ENCODE measurements at regions of chr11 and their contacts with region 1.

Region 1: GRCh38 chr11:14789879-14790484 is 102.0 kb downstream of the CYP2R1 start:
- DNase-seq: no peak
- H3K4me3 Mint-ChIP-seq: no peak overlapping the region
- H3K27ac Mint-ChIP-seq: no peak overlapping the region
- H3K4me1 Mint-ChIP-seq: peaks cover 18% of the 10 kb centered on the region
- H3K27me3 Mint-ChIP-seq: no peaks in the 10 kb centered on the region

Region 2: DNA sequence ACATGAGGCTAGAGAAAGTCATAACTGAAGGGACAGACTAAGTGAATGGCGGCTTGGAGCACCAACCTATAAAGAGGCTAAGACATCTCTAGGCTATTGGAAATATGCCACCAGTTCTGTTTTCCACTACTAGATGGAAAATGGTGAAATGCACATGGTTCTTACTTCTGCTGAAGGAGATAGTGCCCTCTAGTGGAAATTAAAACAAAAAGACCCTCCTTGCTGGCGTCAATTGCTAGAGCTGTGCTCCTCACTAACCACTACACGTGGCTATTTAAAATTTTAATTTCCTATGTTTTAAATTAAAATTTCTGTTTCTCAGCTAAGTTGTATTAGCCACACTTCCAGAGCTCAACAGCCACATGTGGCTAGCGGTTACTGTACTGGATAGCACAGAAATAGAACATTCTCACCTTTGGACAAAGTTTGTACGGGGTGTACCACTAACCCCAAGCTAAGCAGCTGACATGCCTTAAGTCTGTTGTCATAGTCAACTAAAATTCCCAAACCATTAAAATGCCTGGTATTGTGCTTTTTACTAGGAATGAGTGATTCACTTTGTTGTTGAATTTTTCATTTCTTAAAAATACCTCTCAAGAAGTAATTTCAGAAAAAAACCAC is 216.3 kb after region 1 on chr11:
- intact Hi-C with region 1: loop called (anchors 5 kb)
- DNase-seq: peak; percentile 67
- H3K4me3 Mint-ChIP-seq: no peak overlapping the region
- H3K27ac Mint-ChIP-seq: no peak overlapping the region
- H3K4me1 Mint-ChIP-seq: no peaks in the 10 kb centered on the region
- H3K27me3 Mint-ChIP-seq: peaks cover 48% of the 10 kb centered on the region

Region 3: DNA sequence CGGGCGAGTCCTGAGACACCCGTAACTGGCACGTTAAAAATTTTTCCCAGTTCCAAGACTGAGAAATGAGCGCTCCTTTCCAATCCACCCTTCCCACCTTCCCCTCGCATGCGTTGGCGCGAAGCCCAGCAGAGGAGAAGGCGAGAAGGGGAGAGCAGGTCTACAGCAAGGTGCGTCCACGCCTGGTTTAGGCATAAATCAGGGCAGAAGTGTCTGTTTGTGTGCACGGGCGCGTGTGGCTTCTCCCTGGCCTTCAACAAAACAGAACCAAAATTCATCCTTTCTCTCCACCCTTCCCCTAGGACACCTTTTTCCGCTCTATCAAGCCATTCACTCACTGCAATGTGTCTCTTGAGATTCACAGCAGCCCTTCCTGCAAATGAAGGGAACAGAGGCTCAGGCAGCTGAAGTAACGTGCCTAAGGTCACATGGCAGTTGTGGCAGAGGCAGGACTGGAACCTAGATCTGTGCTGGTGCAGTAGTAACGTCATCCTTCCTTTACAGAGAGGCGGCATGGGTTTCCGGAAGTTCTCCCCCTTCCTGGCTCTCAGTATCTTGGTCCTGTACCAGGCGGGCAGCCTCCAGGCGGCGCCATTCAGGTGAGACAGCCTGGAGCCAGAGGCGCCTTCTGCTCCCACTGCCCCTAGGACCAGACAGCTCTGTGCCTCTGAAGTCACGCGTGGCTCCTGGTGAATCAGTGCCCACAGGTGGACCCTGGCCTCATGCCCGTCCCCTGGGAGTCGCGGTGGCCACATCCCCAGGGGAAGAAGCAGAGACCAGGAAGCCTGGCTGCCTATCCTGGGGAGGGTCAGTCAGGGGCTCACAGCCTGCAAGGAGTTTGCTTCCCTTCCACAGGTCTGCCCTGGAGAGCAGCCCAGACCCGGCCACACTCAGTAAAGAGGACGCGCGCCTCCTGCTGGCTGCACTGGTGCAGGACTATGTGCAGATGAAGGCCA is 284.5 kb after region 1 on chr11:
- intact Hi-C with region 1: loop called (anchors 1 kb)
- DNase-seq: peak; percentile 95
- H3K4me3 Mint-ChIP-seq: peak overlapping the region; percentile 84
- H3K27ac Mint-ChIP-seq: peak overlapping the region; percentile 59
- H3K4me1 Mint-ChIP-seq: peaks cover 16% of the 10 kb centered on the region
- H3K27me3 Mint-ChIP-seq: peaks cover 37% of the 10 kb centered on the region

Region 4: GRCh38 chr11:15208378-15209222 is 418.6 kb after region 1 on chr11:
- intact Hi-C with region 1: loop called (anchors 5 kb)
- DNase-seq: peak; percentile 93
- H3K4me3 Mint-ChIP-seq: no peak overlapping the region
- H3K27ac Mint-ChIP-seq: no peak overlapping the region
- H3K4me1 Mint-ChIP-seq: no peaks in the 10 kb centered on the region
- H3K27me3 Mint-ChIP-seq: peaks cover 11% of the 10 kb centered on the region

Measured in activated CD4-positive, alpha-beta T cell treated with anti-CD3 and anti-CD28 coated beads, Interleukin-2, amount 10 ng/mL, durations not matched to agents 24 days and 14 days (primary cell).